Activated B cell treated with CpG ODN at 0.5 μM for 24 hours (primary cell): ENCODE measurements at regions of chr17 and their contacts with region 1.

Region 1: GRCh38 chr17:8916466-8916865 is 49.0 kb upstream of the PIK3R6 start:
- DNase-seq: no peak
- ATAC-seq: no peak
- H3K4me3 Mint-ChIP-seq: no peak overlapping the region
- H3K27ac Mint-ChIP-seq: peak overlapping the region; percentile 25
- H3K4me1 Mint-ChIP-seq: peaks cover 73% of the 10 kb centered on the region
- H3K27me3 Mint-ChIP-seq: no peaks in the 10 kb centered on the region
- CTCF ChIP-seq: no peak

Region 2: DNA sequence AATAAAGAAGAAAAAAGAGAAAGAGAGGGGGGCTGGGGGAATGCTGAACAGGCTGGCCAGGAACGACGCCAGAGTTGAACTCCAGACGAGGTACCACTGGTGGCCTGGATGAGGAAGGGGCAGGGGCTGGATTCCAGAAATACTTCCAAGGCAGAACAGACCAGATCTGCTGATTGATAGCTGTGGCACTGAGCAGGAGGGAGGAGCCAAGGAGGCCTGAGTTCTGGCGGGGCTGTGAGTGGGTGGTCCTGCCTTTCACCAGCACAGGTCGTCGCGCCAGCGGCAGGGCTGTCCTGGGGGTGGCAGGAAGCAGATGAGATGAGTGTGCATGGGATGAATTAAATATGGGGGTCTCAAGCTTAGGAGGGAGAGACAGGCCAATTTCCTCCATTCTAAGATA is 177.4 kb before region 1 on chr17:
- CTCF ChIA-PET with region 1: no interaction called
- POLR2A ChIA-PET with region 1: no interaction called
- intact Hi-C with region 1: no loop called
- DNase-seq: no peak
- ATAC-seq: no peak
- H3K4me3 Mint-ChIP-seq: no peak overlapping the region
- H3K27ac Mint-ChIP-seq: no peak overlapping the region
- H3K4me1 Mint-ChIP-seq: peaks cover 16% of the 10 kb centered on the region
- H3K27me3 Mint-ChIP-seq: no peaks in the 10 kb centered on the region
- CTCF ChIP-seq: no peak

Region 3: DNA sequence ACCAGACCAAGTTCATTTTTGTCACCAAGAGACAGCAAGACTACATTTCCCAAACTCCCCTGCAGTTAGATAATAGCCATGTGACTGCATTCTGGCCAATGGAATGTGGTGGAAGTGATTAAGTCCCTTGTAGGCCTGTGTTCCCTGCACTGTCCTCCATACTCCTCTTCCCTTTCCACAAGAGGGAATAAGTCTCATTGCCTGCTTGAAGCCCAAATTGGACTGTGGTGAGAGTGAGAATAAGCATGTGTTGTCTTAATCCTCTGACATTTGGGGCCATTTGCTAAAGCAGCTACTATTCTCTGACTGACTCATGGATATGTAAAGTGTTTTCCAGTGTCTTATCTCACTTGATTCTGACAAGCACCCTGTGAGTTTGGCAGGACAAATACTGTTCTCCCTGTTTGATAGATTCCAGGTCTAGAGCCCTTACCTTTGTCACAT is 69.7 kb before region 1 on chr17:
- CTCF ChIA-PET with region 1: no interaction called
- POLR2A ChIA-PET with region 1: no interaction called
- intact Hi-C with region 1: no loop called
- DNase-seq: no peak
- ATAC-seq: no peak
- H3K4me3 Mint-ChIP-seq: no peak overlapping the region
- H3K27ac Mint-ChIP-seq: no peak overlapping the region
- H3K4me1 Mint-ChIP-seq: peaks cover 32% of the 10 kb centered on the region
- H3K27me3 Mint-ChIP-seq: no peaks in the 10 kb centered on the region
- CTCF ChIP-seq: no peak

Region 4: GRCh38 chr17:8857919-8858318 is 58.5 kb before region 1 on chr17:
- CTCF ChIA-PET with region 1: no interaction called
- POLR2A ChIA-PET with region 1: interaction called, 13 read pairs
- intact Hi-C with region 1: no loop called
- DNase-seq: peak; percentile 63
- ATAC-seq: peak; percentile 82
- H3K4me3 Mint-ChIP-seq: peak overlapping the region; percentile 70
- H3K27ac Mint-ChIP-seq: peak overlapping the region; percentile 65
- H3K4me1 Mint-ChIP-seq: peaks cover 51% of the 10 kb centered on the region
- H3K27me3 Mint-ChIP-seq: no peaks in the 10 kb centered on the region
- CTCF ChIP-seq: no peak

Region 5: GRCh38 chr17:8935191-8935590 is 18.7 kb after region 1 on chr17:
- CTCF ChIA-PET with region 1: no interaction called
- POLR2A ChIA-PET with region 1: interaction called, 11 read pairs
- intact Hi-C with region 1: loop called (anchors 2 kb)
- DNase-seq: no peak
- ATAC-seq: peak; percentile 75
- H3K4me3 Mint-ChIP-seq: peak overlapping the region; percentile 50
- H3K27ac Mint-ChIP-seq: peak overlapping the region; percentile 81
- H3K4me1 Mint-ChIP-seq: peaks cover 57% of the 10 kb centered on the region
- H3K27me3 Mint-ChIP-seq: no peaks in the 10 kb centered on the region
- CTCF ChIP-seq: no peak

Region 6: DNA sequence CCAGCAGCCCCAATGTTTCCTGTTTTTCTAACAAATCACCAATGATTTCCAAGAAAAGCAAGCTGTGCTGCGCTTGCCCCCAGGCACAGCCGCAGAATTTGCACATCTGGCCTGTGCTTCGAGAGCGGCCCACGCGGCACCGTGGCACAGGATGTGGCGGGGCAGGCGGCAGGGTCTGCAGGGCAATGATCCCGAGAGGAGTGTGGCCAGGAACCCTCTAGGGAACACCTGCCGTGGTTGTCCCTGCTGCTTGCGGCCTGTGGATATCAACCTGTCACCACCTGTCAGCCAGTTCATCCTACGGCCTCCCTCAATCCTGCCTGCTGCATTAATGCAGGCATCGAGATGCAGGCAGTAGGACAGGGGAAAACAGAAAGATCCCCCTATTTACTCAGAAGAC is 25.1 kb after region 1 on chr17:
- CTCF ChIA-PET with region 1: no interaction called
- POLR2A ChIA-PET with region 1: interaction called, 11 read pairs
- intact Hi-C with region 1: loop called (anchors 2 kb)
- DNase-seq: no peak
- ATAC-seq: peak; percentile 57
- H3K4me3 Mint-ChIP-seq: peak overlapping the region; percentile 51
- H3K27ac Mint-ChIP-seq: peak overlapping the region; percentile 73
- H3K4me1 Mint-ChIP-seq: peaks cover 68% of the 10 kb centered on the region
- H3K27me3 Mint-ChIP-seq: no peaks in the 10 kb centered on the region
- CTCF ChIP-seq: no peak

Region 7: DNA sequence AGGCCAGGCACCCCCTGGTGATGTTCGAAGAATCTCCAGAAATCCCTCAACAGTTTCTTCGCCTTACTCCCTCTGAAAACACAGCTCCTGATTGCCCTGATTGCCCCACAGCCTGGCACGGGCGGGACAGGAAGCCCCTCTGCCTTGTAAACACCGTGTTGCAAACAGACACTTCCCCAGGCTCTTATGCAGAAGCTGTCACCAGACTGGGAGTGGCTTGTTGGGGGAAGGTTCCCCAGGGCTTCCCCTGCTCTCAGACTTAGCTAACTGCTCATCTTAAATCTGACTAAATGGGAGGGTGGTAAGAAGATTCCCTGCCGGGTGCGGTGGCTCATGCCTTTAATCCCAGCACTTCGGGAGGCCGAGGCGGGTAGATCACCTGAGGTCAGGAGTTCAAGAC is 37.9 kb after region 1 on chr17:
- CTCF ChIA-PET with region 1: no interaction called
- POLR2A ChIA-PET with region 1: interaction called, 8 read pairs
- intact Hi-C with region 1: loop called (anchors 5 kb)
- DNase-seq: peak; percentile 48
- ATAC-seq: peak; percentile 99
- H3K4me3 Mint-ChIP-seq: peak overlapping the region; percentile 70
- H3K27ac Mint-ChIP-seq: peak overlapping the region; percentile 86
- H3K4me1 Mint-ChIP-seq: peaks cover 92% of the 10 kb centered on the region
- H3K27me3 Mint-ChIP-seq: no peaks in the 10 kb centered on the region
- CTCF ChIP-seq: no peak

Region 8: GRCh38 chr17:8965394-8966168 is 49.1 kb after region 1 on chr17 and contains the start of gene PIK3R5:
- CTCF ChIA-PET with region 1: interaction called, 5 read pairs
- POLR2A ChIA-PET with region 1: interaction called, 34 read pairs
- intact Hi-C with region 1: loop called (anchors 1 kb)
- DNase-seq: peak; percentile 88
- ATAC-seq: peak; percentile 87
- H3K4me3 Mint-ChIP-seq: peak within 1 kb of the TSS; percentile 88
- H3K27ac Mint-ChIP-seq: peak within 1 kb of the TSS; percentile 83
- H3K4me1 Mint-ChIP-seq: peaks cover 58% of the 10 kb centered on the region
- H3K27me3 Mint-ChIP-seq: no peaks in the 10 kb centered on the region
- CTCF ChIP-seq: no peak
- total RNA-seq, gene PIK3R5: 31.0 and 34.2 TPM in 2 replicates

Region 9: GRCh38 chr17:8997994-8998628 is 81.6 kb after region 1 on chr17:
- CTCF ChIA-PET with region 1: interaction called, 8 read pairs
- POLR2A ChIA-PET with region 1: interaction called, 6 read pairs
- intact Hi-C with region 1: loop called (anchors 5 kb)
- DNase-seq: peak; percentile 72
- ATAC-seq: peak; percentile 74
- H3K4me3 Mint-ChIP-seq: no peak overlapping the region
- H3K27ac Mint-ChIP-seq: no peak overlapping the region
- H3K4me1 Mint-ChIP-seq: peaks cover 22% of the 10 kb centered on the region
- H3K27me3 Mint-ChIP-seq: peaks cover 10% of the 10 kb centered on the region
- CTCF ChIP-seq: peak; percentile 73

Region 10: GRCh38 chr17:9200699-9201359 is 284.4 kb after region 1 on chr17:
- CTCF ChIA-PET with region 1: no interaction called
- POLR2A ChIA-PET with region 1: no interaction called
- intact Hi-C with region 1: no loop called
- DNase-seq: no peak
- ATAC-seq: peak; percentile 82
- H3K4me3 Mint-ChIP-seq: peak overlapping the region; percentile 24
- H3K27ac Mint-ChIP-seq: peak overlapping the region; percentile 85
- H3K4me1 Mint-ChIP-seq: peaks cover 51% of the 10 kb centered on the region
- H3K27me3 Mint-ChIP-seq: no peaks in the 10 kb centered on the region
- CTCF ChIP-seq: no peak